ENCODE measurements at regions of chr7 and their contacts with region 1.

Region 1: DNA sequence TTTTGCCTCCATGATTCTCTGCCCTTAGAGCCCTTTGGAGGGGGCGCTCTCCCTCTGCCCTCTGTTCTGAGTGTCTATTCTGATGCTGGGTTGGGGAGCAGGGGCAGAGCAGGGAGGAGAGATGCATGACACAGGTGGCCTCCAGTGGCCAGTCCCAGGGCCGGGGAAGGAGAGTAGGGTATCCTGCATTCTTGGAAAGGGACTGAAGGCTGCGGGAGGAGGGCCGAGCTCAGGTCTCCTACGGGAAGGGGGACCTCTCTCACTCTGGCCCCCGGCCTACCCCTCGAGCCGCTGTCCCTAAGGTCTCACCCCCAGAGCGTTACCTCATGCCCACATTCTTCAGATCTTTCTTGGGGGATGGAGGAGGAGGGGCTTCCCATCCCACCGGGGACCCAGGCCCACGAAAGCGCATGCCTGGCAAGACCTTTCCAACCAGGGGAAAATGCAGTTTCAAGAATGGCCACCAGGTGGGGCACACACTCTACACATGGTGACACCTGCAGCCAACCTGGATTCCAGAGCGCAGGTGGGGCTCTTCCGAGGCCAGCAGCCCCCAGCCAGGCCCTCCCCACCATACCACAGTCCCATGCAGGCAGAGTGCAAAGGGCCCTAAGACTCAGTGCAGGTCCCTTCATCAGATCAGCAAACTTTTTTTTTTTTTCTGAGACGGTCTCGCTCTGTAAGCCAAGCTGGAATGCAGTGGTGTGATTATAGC is 86.4 kb downstream of the MYL10 start:
- DNase-seq: no peak
- H3K4me3 ChIP-seq: no peak overlapping the region
- H3K27ac ChIP-seq: no peak overlapping the region
- H3K27me3 ChIP-seq: peaks cover 2% of the 10 kb centered on the region
- CTCF ChIP-seq: peak; percentile 80

Region 2: GRCh38 chr7:101363734-101364374 is 178.8 kb before region 1 on chr7:
- CTCF ChIA-PET with region 1: interaction called, 36 read pairs
- POLR2A ChIA-PET with region 1: no interaction called
- DNase-seq: peak; percentile 7
- H3K4me3 ChIP-seq: peak overlapping the region; percentile 45
- H3K27ac ChIP-seq: no peak overlapping the region
- H3K27me3 ChIP-seq: peaks cover 22% of the 10 kb centered on the region
- CTCF ChIP-seq: peak; percentile 80

Region 3: DNA sequence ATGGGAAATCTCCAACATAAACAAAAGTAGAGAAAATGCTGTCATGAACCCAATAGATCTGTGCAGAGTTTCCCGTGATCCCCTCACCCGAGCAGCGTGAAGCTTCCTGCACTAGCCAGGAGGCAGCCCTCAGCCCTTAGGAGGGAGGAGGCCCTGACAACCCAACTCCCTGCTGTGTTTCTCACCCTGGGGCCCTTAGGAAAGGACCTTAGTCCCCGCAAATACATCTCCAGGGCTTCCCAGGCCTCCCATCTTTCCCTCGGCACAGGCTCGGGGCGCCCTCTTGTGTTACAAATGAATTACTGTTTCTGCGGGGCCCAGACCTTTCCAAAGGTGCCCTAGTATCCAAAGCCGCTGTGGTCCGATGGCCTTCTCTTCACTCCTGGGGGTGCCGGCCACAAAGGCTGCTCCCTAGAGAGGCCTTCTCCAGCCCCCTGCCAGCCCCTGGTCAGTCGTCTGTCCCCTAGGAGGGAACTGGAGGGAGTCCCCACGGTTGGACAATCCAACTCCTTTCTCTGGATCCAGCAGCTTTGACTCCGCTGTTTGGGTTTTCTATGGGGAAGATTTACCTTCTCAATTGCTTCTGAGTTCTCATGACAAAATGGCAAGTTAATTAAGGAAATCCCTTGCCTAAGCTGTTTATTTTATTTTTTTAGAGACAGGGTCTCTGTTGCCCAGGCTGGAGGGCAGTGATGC is 694.1 kb after region 1 on chr7:
- CTCF ChIA-PET with region 1: interaction called, 16 read pairs
- POLR2A ChIA-PET with region 1: no interaction called
- DNase-seq: peak; percentile 24
- H3K4me3 ChIP-seq: no peak overlapping the region
- H3K27ac ChIP-seq: no peak overlapping the region
- H3K27me3 ChIP-seq: no peaks in the 10 kb centered on the region
- CTCF ChIP-seq: peak; percentile 87

Region 4: DNA sequence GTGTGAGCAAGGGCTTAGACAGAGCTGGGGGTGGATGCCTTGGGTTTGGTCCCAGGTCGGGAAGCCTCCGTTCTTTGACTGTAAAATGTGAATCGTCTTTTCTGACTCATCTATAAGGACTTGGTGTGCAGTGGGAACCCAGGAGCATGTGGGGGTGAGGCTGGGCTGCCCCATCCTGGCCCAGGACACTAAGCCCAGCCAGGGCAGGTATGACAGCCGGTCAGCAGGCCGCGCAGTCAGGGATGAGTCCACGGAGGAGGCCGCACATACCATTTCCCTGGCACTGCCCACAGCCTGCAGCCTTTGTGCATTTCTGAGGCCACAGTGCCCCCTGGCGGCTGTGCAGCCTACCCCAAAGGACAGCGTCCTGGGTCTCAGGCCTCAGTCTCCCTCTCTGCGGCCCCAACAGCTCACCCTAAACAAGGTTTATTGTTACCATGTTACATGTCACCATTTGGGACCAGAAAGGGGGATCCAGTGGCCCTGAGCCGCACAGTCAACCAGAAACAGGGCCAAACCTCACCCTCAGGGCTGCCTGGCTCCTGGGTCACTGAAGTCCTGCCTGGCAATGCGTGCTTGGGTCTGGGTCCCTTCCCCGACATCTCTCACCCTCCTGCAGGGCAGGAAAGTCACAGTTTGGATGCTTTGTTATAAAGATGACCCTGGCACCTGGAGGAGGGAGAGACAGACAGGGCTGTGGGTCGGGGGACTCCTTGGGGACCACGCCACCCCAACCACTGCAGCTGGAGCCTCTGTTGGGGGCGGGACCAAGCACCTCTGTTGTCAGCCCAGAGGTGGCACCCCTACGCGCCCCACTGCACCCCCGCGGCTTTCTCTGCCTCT is 729.6 kb after region 1 on chr7:
- CTCF ChIA-PET with region 1: interaction called, 41 read pairs
- POLR2A ChIA-PET with region 1: no interaction called
- DNase-seq: peak; percentile 41
- H3K4me3 ChIP-seq: no peak overlapping the region
- H3K27ac ChIP-seq: no peak overlapping the region
- H3K27me3 ChIP-seq: no peaks in the 10 kb centered on the region
- CTCF ChIP-seq: peak; percentile 93

Measured in AG04450 (cell line).